Body of pancreas (tissue), 4 donors: ENCODE measurements at regions of chr5 and their contacts with region 1.

Region 1: GRCh38 chr5:180126726-180127681 is 55.4 kb upstream of the RNF130 start:
- DNase-seq: peak in 1 of 4 donors; percentile 40
- ATAC-seq: peak; percentile 47
- H3K4me3 ChIP-seq: no peak overlapping the region
- H3K27ac ChIP-seq: no peak overlapping the region
- H3K4me1 ChIP-seq: peaks cover 6% of the 10 kb centered on the region
- H3K27me3 ChIP-seq: peaks cover 0 to 10% of the 10 kb centered on the region in 2 donors
- CTCF ChIP-seq: peak; percentile 59 to 77 (median 62)
- POLR2A ChIP-seq: no peak

Region 2: DNA sequence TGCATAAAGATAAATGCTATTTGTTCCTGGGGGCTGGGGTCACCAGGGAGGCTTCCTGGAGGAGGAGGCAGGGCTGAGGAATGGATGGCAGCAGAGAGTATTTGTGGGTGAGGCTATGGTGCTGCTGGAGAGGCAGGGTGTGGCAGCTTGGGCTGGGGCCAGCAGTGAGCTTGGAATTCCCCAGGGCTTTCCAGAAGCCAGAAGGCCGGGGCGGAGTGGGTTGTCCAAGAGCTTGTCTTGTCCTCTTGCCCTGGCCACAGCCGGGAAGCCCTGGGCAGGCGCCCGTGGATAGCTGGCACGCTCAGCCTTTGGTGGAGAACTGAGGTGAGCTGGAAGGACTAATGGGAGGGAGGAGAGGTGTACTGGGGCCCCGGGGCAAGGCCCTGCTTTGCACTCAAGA is 340.0 kb after region 1 on chr5:
- intact Hi-C with region 1: loop called (anchors 10 kb)
- DNase-seq: peak in 3 of 4 donors; percentile 18 to 49 (median 27)
- ATAC-seq: no peak
- H3K4me3 ChIP-seq: no peak overlapping the region
- H3K27ac ChIP-seq: no peak overlapping the region
- H3K4me1 ChIP-seq: peaks cover 12% of the 10 kb centered on the region
- H3K27me3 ChIP-seq: no peaks in the 10 kb centered on the region
- CTCF ChIP-seq: no peak
- POLR2A ChIP-seq: no peak

Region 3: GRCh38 chr5:180605554-180606214 is 478.7 kb after region 1 on chr5:
- intact Hi-C with region 1: no loop called
- DNase-seq: peak; percentile 70 to 81 (median 78)
- ATAC-seq: peak; percentile 66
- H3K4me3 ChIP-seq: no peak overlapping the region
- H3K27ac ChIP-seq: no peak overlapping the region
- H3K4me1 ChIP-seq: no peaks in the 10 kb centered on the region
- H3K27me3 ChIP-seq: no peaks in the 10 kb centered on the region
- CTCF ChIP-seq: peak; percentile 78 to 88 (median 80)
- POLR2A ChIP-seq: no peak